ENCODE measurements at regions of chr12 and their contacts with region 1.

Region 1: DNA sequence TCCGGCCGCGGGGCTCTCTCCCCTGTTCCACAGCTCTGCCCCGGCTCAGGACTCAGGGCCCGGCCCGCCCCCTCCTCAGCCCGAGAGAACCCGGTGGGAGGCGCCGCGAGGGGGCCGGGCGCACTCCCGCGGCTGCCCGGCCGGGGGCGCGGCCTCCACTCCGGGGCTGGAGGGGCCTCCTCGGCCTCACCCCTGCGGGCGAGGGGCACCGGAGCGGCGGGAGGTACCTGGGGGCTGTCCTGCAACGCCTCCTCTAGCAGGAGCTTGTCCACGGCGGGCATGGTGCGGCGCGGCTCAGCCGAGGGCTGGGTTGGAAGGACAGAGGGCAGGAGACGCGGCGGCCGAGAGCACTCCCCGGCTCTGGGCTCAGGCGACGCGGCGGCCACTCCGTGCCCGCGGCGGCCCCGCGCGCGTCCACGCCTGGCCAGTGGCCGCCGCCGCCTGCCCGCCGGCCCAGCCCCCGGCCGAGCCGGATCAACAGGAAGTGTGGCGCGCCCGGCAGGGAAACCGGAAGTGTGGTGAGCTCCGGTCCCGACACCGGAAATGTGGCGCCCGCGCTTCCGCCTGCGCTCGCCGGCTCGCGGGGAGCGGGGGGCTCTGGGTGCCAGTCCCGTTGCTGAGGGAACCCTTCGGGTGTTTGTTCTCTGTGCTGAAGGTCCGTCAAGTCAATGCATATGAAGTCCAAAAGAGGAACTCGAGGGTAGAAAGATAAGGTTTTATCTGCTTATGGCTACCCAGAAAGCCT is at the start of gene APPL2:
- DNase-seq: peak; percentile 51 to 94
- H3K4me3 ChIP-seq: peak within 1 kb of the TSS; percentile 66 to 92
- H3K27ac ChIP-seq: peak within 1 kb of the TSS; percentile 82 to 95
- H3K4me1 ChIP-seq: peaks cover 15 to 28% of the 10 kb centered on the region in 2 donors
- H3K27me3 ChIP-seq: no peaks in the 10 kb centered on the region
- CTCF ChIP-seq: peak; percentile 11 to 55 (median 44)
- total RNA-seq, gene APPL2: 4.6 TPM

Region 2: GRCh38 chr12:105107494-105108371 is 128.2 kb before region 1 on chr12 and contains the start of gene WASHC4:
- intact Hi-C with region 1: no loop called
- DNase-seq: peak; percentile 77 to 96
- H3K4me3 ChIP-seq: peak within 1 kb of the TSS; percentile 83 to 94
- H3K27ac ChIP-seq: peak within 1 kb of the TSS; percentile 97 to 98
- H3K4me1 ChIP-seq: peaks cover 6 to 11% of the 10 kb centered on the region in 2 donors
- H3K27me3 ChIP-seq: no peaks in the 10 kb centered on the region
- CTCF ChIP-seq: no peak
- total RNA-seq, gene WASHC4: 22.8 TPM

Region 3: GRCh38 chr12:105253882-105254513 is 18.1 kb after region 1 on chr12:
- intact Hi-C with region 1: loop called (anchors 2 kb)
- DNase-seq: no peak
- H3K4me3 ChIP-seq: no peak overlapping the region
- H3K27ac ChIP-seq: peak overlapping the region; percentile 54 to 83
- H3K4me1 ChIP-seq: peaks cover 7 to 41% of the 10 kb centered on the region in 2 donors
- H3K27me3 ChIP-seq: no peaks in the 10 kb centered on the region
- CTCF ChIP-seq: no peak

Region 4: GRCh38 chr12:105330283-105330930 is 94.5 kb after region 1 on chr12 and contains the start of gene C12orf75:
- intact Hi-C with region 1: loop called (anchors 2 kb)
- DNase-seq: peak; percentile 37 to 88
- H3K4me3 ChIP-seq: peak within 1 kb of the TSS; percentile 75 to 87
- H3K27ac ChIP-seq: peak within 1 kb of the TSS; percentile 62 to 83
- H3K4me1 ChIP-seq: peaks cover 0 to 19% of the 10 kb centered on the region in 2 donors
- H3K27me3 ChIP-seq: no peaks in the 10 kb centered on the region
- CTCF ChIP-seq: no peak
- total RNA-seq, gene C12orf75: 56.5 TPM

Measured in ascending aorta (tissue), 2 donors.